Activated CD4-positive, alpha-beta T cell treated with anti-CD3 and anti-CD28 coated beads for 36 hours (primary cell): ENCODE measurements at regions of chr13 and their contacts with region 1.

Region 1: DNA sequence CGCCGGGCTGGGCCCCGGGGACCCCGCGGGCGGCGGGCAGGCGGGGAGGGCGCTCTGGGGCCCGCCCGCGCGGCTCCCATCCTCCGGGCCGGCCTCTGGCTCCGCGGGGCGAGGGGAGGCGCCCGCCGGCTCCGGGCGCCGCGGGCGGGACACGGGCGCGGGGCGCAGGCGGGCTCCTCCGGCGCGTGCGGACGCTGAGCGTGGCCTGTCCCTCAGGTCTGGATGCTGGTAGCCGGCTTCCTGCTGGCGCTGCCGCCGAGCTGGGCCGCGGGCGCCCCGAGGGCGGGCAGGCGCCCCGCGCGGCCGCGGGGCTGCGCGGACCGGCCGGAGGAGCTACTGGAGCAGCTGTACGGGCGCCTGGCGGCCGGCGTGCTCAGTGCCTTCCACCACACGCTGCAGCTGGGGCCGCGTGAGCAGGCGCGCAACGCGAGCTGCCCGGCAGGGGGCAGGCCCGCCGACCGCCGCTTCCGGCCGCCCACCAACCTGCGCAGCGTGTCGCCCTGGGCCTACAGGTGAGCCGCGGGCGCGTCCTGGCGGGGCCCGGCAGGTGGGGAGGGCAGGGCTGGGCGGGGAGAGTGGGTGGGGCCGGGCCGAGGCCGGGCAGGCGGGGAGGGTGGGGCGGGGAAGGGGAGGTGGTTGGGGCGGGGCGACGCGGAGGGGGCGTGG is 414 bp downstream of the IL17D start:
- DNase-seq: peak; percentile 87
- ATAC-seq: peak; percentile 89
- H3K4me3 Mint-ChIP-seq: peak overlapping the region; percentile 58
- H3K27ac Mint-ChIP-seq: no peak overlapping the region
- H3K4me1 Mint-ChIP-seq: peaks cover 13% of the 10 kb centered on the region
- H3K27me3 Mint-ChIP-seq: peaks cover 21% of the 10 kb centered on the region

Region 2: DNA sequence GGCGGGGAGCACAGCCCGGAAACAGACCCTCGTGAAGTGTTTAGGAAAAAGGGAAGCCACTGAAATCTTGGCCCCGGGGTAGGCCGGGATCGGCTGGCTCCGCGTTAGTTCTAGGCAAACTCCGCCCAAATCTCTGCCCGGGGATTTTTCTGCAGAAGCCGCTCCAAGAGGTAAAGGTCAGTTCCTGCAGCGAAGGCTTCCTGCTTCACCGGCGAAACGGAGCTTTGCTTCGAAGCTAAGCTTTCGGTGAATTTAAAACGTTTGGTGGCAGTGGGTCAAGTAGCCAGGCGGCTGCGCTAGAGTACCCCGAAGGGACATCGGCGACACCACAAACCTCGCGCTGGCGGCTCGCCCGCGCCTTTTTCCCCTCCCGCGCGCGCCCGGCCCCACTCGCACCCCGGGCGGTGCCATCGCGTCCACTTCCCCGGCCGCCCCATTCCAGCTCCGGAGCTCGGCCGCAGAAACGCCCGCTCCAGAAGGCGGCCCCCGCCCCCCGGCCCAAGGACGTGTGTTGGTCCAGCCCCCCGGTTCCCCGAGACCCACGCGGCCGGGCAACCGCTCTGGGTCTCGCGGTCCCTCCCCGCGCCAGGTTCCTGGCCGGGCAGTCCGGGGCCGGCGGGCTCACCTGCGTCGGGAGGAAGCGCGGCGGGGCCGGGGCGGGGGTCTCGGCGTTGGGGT is 511.6 kb before region 1 on chr13:
- CTCF ChIA-PET with region 1: interaction called, 3 read pairs
- POLR2A ChIA-PET with region 1: no interaction called
- intact Hi-C with region 1: loop called (anchors 5 kb)
- DNase-seq: peak; percentile 52
- ATAC-seq: no peak
- H3K4me3 Mint-ChIP-seq: peak overlapping the region; percentile 65
- H3K27ac Mint-ChIP-seq: no peak overlapping the region
- H3K4me1 Mint-ChIP-seq: peaks cover 20% of the 10 kb centered on the region
- H3K27me3 Mint-ChIP-seq: peaks cover 48% of the 10 kb centered on the region

Region 3: DNA sequence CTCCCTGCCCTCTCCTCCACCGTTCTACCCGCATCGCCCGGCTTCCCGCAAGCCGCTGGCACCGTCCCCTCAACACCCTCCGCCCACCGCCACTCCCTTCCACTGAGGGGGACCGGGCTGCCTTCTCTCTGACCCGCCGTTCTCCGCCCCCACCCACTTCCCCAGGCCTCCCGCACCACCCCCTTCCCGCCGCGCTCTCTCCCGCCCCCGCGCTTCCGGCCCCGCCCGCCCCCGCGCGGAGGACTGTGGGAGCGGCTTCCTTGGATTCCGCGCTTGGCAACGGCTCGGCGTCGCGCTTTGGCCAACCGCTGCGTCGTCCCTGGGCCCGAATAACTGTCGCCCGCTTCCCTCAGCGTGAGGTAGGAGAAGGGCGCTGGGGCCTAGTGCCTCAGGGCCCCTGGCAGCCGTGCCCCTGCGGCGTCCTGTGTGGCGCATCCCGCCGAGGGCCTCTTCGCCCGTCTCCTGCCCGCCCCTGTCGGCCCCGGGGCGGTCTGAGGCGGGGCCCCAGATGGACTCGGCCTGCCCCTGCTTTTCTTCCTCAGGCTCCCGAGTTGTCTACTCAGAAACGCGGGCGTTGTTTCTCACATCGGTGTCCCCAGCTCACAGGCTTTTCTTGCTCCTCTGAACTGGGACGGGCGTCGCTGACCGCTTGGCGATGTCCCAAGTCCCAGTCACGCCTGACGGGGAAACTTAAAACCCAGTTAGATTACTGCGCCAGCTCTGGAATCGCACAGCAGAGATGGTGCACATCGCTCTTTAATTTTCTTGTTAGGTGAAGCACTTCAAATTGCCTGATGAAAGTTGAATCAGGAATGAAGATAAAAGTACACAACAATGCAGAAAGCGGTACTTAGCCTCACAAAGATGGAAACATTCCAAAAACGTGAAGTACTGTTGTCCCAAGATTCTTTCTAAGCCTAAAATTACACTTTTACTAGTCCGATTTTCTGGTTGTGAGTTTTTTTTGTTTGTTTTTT is 136.7 kb before region 1 on chr13 and contains the start of gene IFT88:
- CTCF ChIA-PET with region 1: no interaction called
- POLR2A ChIA-PET with region 1: no interaction called
- intact Hi-C with region 1: loop called (anchors 1 to 10 kb)
- DNase-seq: peak; percentile 89
- ATAC-seq: peak; percentile 83
- H3K4me3 Mint-ChIP-seq: peak within 1 kb of the TSS; percentile 81
- H3K27ac Mint-ChIP-seq: peak within 1 kb of the TSS; percentile 80
- H3K4me1 Mint-ChIP-seq: peaks cover 19% of the 10 kb centered on the region
- H3K27me3 Mint-ChIP-seq: no peaks in the 10 kb centered on the region
- total RNA-seq, gene IFT88: 4.7 to 4.8 TPM

Region 4: DNA sequence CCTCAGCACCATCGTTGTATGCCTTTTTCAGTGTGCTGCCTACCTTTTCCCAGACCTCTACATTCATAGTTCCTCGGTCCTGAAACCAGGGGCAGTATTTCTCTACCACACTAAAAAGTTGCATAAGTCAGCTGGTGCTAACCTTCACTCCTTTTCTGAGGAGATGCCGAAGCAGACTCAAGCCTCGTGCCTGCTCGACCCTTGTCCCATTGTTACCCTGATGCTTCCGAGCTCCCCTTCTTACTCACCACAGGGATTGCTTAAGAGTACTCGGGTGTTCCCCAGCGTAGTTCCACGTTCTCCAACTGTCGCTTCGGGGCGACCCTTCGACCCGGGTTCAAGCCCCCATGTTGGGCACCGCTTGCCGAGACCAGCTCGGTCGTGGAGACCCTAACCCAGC is 19.4 kb before region 1 on chr13:
- CTCF ChIA-PET with region 1: no interaction called
- POLR2A ChIA-PET with region 1: no interaction called
- intact Hi-C with region 1: no loop called
- DNase-seq: no peak
- ATAC-seq: no peak
- H3K4me3 Mint-ChIP-seq: no peak overlapping the region
- H3K27ac Mint-ChIP-seq: no peak overlapping the region
- H3K4me1 Mint-ChIP-seq: no peaks in the 10 kb centered on the region
- H3K27me3 Mint-ChIP-seq: no peaks in the 10 kb centered on the region

Region 5: GRCh38 chr13:20902438-20903163 is 198.7 kb after region 1 on chr13 and contains the start of gene XPO4:
- CTCF ChIA-PET with region 1: no interaction called
- POLR2A ChIA-PET with region 1: no interaction called
- intact Hi-C with region 1: loop called in 1 of 2 experiments (anchors 1 kb)
- DNase-seq: peak; percentile 91
- ATAC-seq: peak; percentile 94
- H3K4me3 Mint-ChIP-seq: peak within 1 kb of the TSS; percentile 91
- H3K27ac Mint-ChIP-seq: peak within 1 kb of the TSS; percentile 92
- H3K4me1 Mint-ChIP-seq: peaks cover 32% of the 10 kb centered on the region
- H3K27me3 Mint-ChIP-seq: no peaks in the 10 kb centered on the region
- total RNA-seq, gene XPO4: 22.8 to 26.4 TPM

Region 6: DNA sequence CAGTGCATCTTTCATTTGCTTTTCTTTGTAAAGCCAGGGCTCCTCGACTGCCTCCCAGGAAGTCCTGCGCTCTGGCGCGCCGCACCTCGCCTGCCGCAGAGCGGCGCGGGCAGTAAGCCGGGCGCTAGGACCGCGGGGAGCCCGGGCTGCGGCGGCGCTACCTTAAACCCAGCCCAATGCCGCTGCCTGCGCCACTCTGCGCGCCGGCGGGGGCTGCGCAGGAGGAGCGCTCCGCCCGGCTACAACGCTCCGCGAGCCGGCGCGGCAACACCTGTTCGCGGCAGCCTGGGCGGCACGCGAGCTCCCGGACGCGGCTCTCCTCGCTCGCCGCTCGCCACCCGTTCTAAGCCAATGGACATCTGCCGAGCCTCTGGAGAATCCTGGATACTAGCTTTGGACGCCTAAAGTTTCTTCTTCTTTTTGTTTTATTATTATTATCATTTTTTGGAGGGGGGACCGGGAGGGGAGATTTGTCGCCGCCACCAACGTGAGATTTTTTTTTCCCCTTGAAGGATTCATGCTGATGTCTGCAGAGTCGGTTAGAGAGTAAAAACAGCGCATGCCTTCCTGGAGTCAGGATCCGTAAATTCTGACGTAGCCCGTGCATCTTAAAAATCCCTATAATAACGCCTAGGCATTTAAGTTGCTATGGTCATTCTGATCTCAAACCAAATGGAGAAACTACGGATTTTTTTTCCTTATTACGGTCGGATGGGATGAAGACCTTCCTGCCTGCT is 967.1 kb after region 1 on chr13 and contains the start of gene FGF9:
- CTCF ChIA-PET with region 1: no interaction called
- POLR2A ChIA-PET with region 1: no interaction called
- intact Hi-C with region 1: loop called in 1 of 2 experiments (anchors 5 kb)
- DNase-seq: peak; percentile 88
- ATAC-seq: peak; percentile 78
- H3K4me3 Mint-ChIP-seq: peak within 1 kb of the TSS; percentile 76
- H3K27ac Mint-ChIP-seq: peak within 1 kb of the TSS; percentile 53
- H3K4me1 Mint-ChIP-seq: peaks cover 45% of the 10 kb centered on the region
- H3K27me3 Mint-ChIP-seq: peaks cover 43% of the 10 kb centered on the region
- total RNA-seq, gene FGF9: 0.19 TPM in 1 of 2 experiments, not detected in the other